ENCODE measurements at regions of chr1 and their contacts with region 1.

Region 1: DNA sequence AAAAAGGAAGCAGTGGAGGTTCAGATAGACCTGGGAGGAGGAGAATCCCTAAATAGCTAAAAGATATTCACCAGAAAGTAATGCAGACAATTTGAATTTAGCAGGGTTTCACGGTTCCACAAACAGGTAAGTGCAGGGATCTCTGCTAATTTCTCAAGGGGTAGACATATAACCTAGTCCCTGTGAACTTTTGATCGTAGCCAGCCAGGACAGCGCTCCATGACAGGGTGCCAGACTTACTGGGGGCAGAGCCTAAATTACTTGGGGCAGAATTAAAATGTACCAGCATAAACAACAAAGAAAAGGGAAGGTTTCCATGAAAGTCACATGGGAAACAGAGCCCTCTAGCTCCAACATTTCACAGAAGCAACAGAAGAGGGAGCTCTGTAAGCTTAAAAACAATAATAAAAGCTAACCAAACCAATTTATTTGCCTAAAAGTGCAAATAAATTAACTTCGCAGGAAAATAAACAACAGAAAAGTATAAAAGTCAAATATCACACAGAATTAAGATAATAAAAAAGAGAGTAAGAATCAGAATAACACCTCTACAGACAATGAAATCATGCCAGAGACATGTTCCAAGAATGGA is 198.3 kb downstream of the DUSP10 start:
- DNase-seq: peak; percentile 36 to 47
- H3K4me3 ChIP-seq: no peak overlapping the region
- H3K27ac ChIP-seq: peak overlapping the region in 2 of 3 donors; percentile 42 to 43
- H3K4me1 ChIP-seq: peaks cover 0 to 7% of the 10 kb centered on the region in 2 donors
- H3K27me3 ChIP-seq: no peaks in the 10 kb centered on the region
- CTCF ChIP-seq: peak in 4 of 6 experiments; percentile 48 to 69 (median 60)
- POLR2A ChIP-seq: no peak

Region 2: DNA sequence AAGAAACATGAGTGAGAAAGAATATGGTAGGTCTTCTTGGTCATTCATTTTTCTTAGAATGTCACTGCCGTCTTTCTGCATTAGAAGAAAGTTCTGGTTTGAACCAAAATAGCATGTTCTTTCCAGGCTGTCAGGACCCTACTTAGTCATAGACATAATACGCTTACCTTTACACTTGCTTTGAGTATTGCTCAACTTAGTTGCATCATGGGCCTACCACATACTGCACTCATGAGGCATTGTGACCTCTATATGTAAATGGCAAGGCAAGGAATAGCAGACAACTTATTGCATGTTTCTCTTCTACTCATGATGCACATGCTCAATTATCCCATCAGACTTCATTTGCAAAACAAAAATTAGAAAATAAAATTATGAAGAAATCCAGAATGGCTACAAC is 249.4 kb before region 1 on chr1:
- intact Hi-C with region 1: no loop called
- DNase-seq: no peak
- H3K4me3 ChIP-seq: no peak overlapping the region
- H3K27ac ChIP-seq: no peak overlapping the region
- H3K4me1 ChIP-seq: no peaks in the 10 kb centered on the region
- H3K27me3 ChIP-seq: no peaks in the 10 kb centered on the region
- CTCF ChIP-seq: no peak
- POLR2A ChIP-seq: no peak

Region 3: DNA sequence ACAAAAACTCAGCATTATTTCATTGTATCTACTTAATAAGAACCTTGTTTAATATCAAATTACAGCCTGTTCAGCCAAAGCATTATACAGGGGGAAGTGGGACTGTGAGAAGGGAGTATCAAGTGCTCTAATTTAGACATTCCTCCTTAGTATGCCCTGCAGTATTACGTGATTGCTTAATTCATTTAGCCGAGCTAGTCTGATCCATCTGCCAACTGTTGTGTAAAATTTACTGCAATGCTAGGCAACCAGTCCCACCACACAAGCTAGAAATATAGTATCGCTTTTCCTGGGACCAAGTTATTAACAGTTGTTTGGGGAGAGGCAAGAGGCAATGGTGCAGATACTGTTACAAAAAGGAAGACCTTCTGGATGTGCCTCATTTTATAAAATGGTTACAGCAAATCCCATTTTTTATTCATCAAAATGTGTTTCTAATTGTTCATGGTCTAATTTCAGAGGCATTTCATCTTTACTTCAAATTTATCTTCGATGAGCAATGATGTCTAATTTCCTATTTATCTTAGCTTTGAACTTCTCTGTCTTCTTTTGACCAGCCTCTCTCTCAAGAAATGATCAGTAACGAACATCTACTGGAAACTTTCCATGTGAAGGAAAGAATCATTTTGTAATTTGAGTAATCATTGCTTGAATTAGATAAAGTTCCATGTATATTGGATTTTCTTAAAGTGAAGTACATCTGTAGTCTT is 85.0 kb before region 1 on chr1:
- intact Hi-C with region 1: no loop called
- DNase-seq: no peak
- H3K4me3 ChIP-seq: no peak overlapping the region
- H3K27ac ChIP-seq: no peak overlapping the region
- H3K4me1 ChIP-seq: no peaks in the 10 kb centered on the region
- H3K27me3 ChIP-seq: no peaks in the 10 kb centered on the region
- CTCF ChIP-seq: no peak
- POLR2A ChIP-seq: no peak

Region 4: GRCh38 chr1:221741711-221742554 is 198.3 kb after region 1 on chr1 and contains the start of gene DUSP10:
- intact Hi-C with region 1: loop called (anchors 10 kb)
- DNase-seq: peak; percentile 99
- H3K4me3 ChIP-seq: peak within 1 kb of the TSS; percentile 50 to 77 (median 51)
- H3K27ac ChIP-seq: peak within 1 kb of the TSS; percentile 96 to 99 (median 99)
- H3K4me1 ChIP-seq: peaks cover 9 to 14% of the 10 kb centered on the region in 2 donors
- H3K27me3 ChIP-seq: no peaks in the 10 kb centered on the region
- CTCF ChIP-seq: no peak
- POLR2A ChIP-seq: peak; percentile 75 to 97
- total RNA-seq, gene DUSP10: 7.2 to 13.8 (median 8.6) TPM

Measured in thyroid gland (tissue), 4 donors.